Lower leg skin (tissue), 4 donors: ENCODE measurements at regions of chr15 and their contacts with region 1.

Region 1: DNA sequence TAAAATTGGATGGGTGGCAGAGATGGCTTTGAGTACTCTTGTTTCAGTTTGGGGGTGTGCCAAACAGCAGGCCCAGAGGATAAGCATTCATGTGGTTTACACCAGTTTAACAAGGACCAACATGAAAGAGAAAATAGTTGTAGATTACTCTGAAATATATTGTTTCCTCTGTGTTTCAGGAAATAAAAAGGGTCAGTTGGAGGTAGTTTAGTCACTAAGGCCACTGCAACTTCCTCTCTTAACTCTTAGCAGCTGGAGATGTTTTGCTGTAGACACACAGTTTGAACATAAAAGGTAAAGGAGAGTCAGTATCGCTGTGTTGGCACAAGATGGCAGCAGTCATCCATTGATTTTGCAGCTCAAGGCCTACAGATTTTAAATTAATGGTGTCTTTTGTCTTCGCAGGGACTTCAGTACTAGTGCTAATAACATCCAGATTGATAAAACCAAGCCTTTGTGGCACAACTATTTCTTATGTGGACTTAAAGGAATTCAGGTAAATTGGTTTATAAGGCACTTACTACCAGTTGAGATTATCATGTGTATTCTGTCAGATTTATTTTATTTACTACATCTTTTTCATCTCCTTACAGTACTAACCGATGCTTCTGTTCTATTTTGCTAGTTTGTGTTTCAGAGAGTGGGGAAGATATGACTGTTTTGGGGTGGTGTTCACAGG is 65.5 kb downstream of the GALK2 start:
- DNase-seq: peak in 1 of 2 donors; percentile 27
- H3K4me3 ChIP-seq: no peak overlapping the region
- CTCF ChIP-seq: peak in 1 of 3 donors; percentile 34
- POLR2A ChIP-seq: no peak

Region 2: GRCh38 chr15:49122541-49123062 is 113.0 kb before region 1 on chr15:
- intact Hi-C with region 1: no loop called
- DNase-seq: no peak
- H3K4me3 ChIP-seq: no peak overlapping the region
- CTCF ChIP-seq: no peak
- POLR2A ChIP-seq: no peak

Region 3: DNA sequence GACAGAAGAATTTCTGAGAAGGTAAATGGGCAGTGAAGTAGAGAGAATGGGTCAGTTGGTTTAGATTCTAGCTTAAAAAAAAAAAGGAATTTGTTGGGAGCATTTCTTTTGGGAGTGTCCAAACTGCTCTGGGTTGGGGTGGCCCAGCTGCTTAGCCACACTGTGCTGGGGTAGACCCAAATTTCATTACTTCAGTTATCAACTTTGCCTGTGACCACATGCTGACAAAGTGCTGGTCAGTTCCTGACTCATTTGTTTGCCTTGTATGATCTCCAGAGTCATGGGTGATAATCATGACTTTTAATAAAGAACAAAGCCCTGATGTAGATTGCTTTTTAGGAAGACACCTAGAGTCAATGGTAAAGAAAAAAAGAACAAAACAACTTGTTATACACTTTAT is 66.0 kb after region 1 on chr15:
- intact Hi-C with region 1: no loop called
- DNase-seq: no peak
- H3K4me3 ChIP-seq: no peak overlapping the region
- CTCF ChIP-seq: no peak
- POLR2A ChIP-seq: no peak

Region 4: DNA sequence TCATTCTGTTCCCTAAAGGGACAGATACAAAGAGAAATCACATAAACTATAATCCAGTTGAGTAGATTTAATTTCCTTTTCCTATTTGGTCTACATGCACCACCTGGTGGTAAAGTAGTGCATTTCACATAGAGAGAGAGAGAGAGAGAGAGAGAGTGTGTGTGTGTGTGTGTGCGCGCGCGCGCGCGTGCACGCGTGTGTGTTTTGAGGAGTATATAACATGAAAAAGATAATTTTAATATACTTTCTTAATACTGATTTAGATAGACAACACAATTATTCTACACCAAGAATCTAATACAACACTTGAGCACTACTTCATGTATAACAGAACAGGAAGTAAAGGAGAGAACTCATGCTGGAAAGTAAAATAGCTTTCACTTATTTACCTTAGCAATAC is 186.4 kb after region 1 on chr15:
- intact Hi-C with region 1: loop called (anchors 10 kb)
- DNase-seq: peak; percentile 27 to 86
- H3K4me3 ChIP-seq: no peak overlapping the region
- CTCF ChIP-seq: peak in 2 of 3 donors; percentile 27 to 91
- POLR2A ChIP-seq: no peak